ENCODE measurements at regions of chr14 and their contacts with region 1.

Region 1: GRCh38 chr14:23114669-23115491 is 4.2 kb downstream of the CEBPE start:
- DNase-seq: peak; percentile 92
- H3K4me3 ChIP-seq: no peak overlapping the region
- H3K27me3 ChIP-seq: peaks cover under 1% of the 10 kb centered on the region; the same call in 1 of the 2 replicates
- CTCF ChIP-seq: no peak

Region 2: DNA sequence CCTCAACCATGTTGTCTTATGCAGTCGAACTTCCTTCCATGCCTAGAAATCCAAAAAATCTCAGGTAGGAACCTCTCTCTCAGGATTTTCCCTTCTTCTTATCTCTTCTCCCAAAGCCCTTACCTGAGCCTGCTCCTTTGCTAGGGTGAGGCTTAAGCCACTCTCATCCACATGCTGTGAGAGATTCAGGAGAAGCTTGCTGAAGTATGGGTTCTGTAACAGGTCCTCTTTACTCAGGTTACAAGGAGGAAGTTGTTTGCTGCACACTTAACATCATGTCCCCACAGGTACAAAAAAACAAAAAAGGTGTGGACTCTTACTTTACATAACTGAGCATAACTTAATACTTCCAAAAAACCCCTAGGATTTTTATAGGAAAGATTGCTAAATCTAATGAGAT is 162.5 kb before region 1 on chr14:
- CTCF ChIA-PET with region 1: no interaction called
- POLR2A ChIA-PET with region 1: no interaction called
- DNase-seq: no peak
- H3K4me3 ChIP-seq: no peak overlapping the region
- H3K27me3 ChIP-seq: no peaks in the 10 kb centered on the region
- CTCF ChIP-seq: no peak

Region 3: DNA sequence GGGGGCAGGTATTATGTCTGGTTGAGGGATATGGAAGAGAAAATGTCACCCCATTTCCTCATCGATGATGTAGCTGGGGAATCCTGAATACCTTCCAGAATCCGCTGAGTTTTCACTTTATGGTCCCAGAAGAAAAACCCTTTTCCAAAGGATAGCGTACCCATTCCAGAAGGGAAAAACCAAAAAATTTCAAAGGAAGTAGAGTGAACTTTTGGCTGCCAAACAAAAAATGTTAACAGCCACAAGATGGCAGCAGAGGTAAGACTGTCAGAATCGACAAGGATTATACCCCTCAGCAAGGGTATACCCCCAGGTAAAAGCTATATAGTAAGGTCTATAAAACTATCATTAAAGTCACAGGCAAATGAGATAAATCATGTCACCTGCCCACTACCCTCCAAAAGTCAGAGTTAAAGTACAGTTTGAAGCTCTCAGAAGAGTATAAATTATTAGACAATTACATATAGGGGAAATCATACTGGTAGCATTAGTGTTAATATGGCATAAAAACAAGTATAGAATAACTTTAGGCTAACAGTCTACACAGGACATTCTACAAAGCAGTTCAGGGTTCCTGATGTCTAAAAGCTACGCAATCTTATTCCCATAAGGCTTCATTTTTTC is 38.0 kb before region 1 on chr14:
- CTCF ChIA-PET with region 1: interaction called, 120 read pairs
- POLR2A ChIA-PET with region 1: no interaction called
- DNase-seq: no peak
- H3K4me3 ChIP-seq: no peak overlapping the region
- H3K27me3 ChIP-seq: no peaks in the 10 kb centered on the region
- CTCF ChIP-seq: peak; percentile 70

Region 4: DNA sequence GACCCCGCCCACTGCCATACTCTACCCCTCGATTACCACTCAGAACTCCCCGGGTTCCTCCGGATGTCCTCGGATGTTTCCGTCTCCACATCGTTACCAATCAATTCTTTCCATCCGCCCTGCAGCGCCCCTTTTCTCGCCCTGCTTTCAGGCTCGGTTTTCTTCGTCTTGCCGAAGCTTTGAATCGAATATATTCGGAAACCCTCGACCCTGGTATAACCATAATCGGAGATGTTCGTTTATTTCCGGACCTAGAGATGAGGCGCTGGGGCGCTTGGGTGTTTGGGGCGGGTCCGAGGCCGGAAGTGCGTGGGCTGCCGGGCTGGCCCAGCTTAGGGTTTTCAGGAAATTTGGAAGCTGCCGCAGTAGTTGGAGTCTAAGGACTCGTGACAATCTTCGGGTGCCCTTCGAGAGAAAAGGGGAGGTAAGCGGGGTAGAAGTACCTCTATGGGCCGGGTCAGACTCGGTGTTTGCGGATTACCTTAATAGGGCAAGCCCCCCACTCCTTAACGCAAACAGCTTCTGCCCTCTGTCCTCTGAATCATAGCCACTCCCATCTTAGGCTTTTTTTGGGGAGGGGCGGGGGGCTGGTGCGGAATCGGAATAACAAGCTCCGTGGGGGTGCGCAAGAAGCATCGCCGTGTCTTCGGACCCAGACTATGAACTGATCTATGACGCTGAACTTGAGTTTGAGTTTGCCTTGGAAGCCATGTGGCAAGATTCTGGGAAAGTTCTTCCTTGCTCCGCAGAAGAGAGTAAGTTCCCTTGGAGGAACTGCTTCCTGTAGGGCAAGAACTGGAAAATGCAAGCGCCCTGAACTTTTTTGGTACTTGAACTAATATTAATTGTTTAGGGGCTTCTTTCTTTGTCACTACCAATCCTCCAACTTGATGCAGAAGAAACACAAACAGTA is 19.4 kb before region 1 on chr14 and contains the start of gene C14orf119:
- CTCF ChIA-PET with region 1: interaction called, 44 read pairs
- POLR2A ChIA-PET with region 1: interaction called, 3 read pairs
- DNase-seq: peak; percentile 99
- H3K4me3 ChIP-seq: peak within 1 kb of the TSS; percentile 89
- H3K27me3 ChIP-seq: no peaks in the 10 kb centered on the region
- CTCF ChIP-seq: no peak
- polyA plus RNA-seq, gene C14orf119: 104 and 112 TPM in 2 replicates

Measured in BJ (cell line).